ENCODE measurements at regions of chr5 and their contacts with region 1.

Region 1: DNA sequence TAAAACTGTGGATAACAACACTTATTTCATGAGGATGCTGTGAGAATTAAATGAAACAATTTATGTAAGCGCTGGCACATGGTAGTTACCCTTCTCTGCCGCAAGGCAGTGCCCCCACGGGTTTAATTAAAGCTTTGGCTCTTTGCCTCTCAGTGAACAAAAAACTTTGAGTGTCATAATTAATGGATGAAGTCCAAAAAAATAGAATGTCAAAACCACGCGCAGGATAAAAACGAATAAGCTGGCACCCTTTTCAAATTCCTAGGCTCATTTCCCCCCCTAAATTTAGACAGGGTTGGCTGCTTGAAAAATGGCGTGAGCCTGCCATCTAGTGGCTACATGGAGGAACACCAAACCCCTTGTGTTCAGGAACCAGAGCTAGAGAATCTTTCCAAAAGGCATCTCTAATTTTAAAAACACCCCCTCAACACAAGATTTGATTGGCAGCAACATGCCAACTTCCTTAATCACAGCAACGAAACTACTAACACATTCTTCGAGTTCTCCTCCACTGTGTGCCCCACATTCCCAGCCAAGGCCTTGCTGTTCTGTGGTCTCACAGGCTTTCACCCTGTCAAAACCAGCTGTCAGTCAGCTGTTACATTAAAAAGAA is 29.0 kb upstream of the CCNG1 start:
- DNase-seq: peak; percentile 57
- CTCF ChIP-seq: peak; percentile 83

Region 2: GRCh38 chr5:162209005-162209605 is 1199.3 kb before region 1 on chr5:
- CTCF ChIA-PET with region 1: interaction called, 22 read pairs
- POLR2A ChIA-PET with region 1: no interaction called
- DNase-seq: peak; percentile 28
- CTCF ChIP-seq: peak; percentile 55

Region 3: GRCh38 chr5:163306421-163306820 is 102.0 kb before region 1 on chr5:
- CTCF ChIA-PET with region 1: interaction called, 25 read pairs
- POLR2A ChIA-PET with region 1: no interaction called
- DNase-seq: no peak
- CTCF ChIP-seq: peak; percentile 14

Region 4: GRCh38 chr5:163373428-163374084 is 34.9 kb before region 1 on chr5:
- CTCF ChIA-PET with region 1: interaction called, 10 read pairs
- POLR2A ChIA-PET with region 1: no interaction called
- DNase-seq: no peak
- CTCF ChIP-seq: no peak

Region 5: GRCh38 chr5:163424836-163425235 is 16.4 kb after region 1 on chr5:
- CTCF ChIA-PET with region 1: interaction called, 24 read pairs
- POLR2A ChIA-PET with region 1: no interaction called
- DNase-seq: no peak
- CTCF ChIP-seq: no peak

Region 6: GRCh38 chr5:163451489-163451888 is 43.1 kb after region 1 on chr5:
- CTCF ChIA-PET with region 1: no interaction called
- POLR2A ChIA-PET with region 1: no interaction called
- DNase-seq: no peak
- CTCF ChIP-seq: no peak

Measured in GM10248 (cell line).